Naive thymus-derived CD8-positive, alpha-beta T cell (primary cell): ENCODE measurements at regions of chr10 and their contacts with region 1.

Region 1: DNA sequence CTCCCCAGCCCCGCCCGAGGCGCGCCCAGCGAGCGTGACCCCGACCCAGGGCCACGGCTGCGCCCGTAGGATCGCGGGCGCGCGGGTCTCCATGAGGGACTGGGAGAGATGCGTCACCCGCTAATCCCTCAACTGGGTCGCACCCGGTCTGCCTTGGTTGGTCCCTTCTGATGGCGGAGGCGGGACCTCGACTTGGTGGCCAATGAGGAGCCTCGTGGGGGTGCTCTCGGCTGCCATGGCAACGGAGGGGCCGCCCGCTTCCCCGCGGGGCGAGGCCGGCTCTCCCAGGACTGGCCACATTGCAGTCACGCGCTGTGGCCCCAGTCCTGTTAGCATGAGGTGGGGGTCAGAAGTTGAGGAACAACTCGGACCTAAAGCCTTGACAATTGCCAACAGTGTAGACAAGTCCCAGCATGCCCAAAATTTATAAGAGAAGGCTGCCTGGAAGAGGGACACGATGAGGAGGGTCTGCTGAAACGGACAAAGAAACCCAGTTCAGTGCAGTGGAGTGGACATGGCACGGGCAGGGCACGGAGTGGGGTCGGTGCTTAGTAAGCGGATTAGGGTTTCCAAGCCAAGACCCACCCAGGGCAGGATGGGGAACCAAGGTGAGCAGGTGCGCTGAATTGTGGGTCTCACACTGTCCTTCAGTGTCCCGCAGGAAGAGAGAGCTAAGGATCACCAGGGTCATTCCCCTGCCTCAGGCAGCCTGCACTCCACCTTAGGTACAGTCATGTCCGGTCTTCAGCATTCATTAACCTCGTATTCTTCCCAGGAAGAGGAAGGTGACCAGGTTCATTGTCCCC is 24.4 kb downstream of the DDIT4 start:
- DNase-seq: peak; percentile 51 to 90 (median 78)
- ATAC-seq: peak; percentile 51
- H3K4me3 Mint-ChIP-seq: peak overlapping the region; percentile 39 to 89 (median 82)
- H3K27ac Mint-ChIP-seq: peak overlapping the region; percentile 43 to 100 (median 97)
- H3K4me1 Mint-ChIP-seq: peaks cover 25 to 63% (median 58%) of the 10 kb centered on the region in 4 donors
- H3K27me3 Mint-ChIP-seq: peaks cover 0 to 2% (median 0%) of the 10 kb centered on the region in 5 donors

Region 2: GRCh38 chr10:72260588-72261322 is 37.4 kb before region 1 on chr10:
- POLR2A ChIA-PET with region 1: interaction called, 12 read pairs
- DNase-seq: peak; percentile 62 to 86 (median 72)
- ATAC-seq: peak; percentile 72 to 75
- H3K4me3 Mint-ChIP-seq: peak overlapping the region; percentile 82 to 94 (median 89)
- H3K27ac Mint-ChIP-seq: peak overlapping the region; percentile 87 to 99 (median 94)
- H3K4me1 Mint-ChIP-seq: peaks cover 37 to 76% (median 75%) of the 10 kb centered on the region in 4 donors
- H3K27me3 Mint-ChIP-seq: no peaks in the 10 kb centered on the region

Region 3: DNA sequence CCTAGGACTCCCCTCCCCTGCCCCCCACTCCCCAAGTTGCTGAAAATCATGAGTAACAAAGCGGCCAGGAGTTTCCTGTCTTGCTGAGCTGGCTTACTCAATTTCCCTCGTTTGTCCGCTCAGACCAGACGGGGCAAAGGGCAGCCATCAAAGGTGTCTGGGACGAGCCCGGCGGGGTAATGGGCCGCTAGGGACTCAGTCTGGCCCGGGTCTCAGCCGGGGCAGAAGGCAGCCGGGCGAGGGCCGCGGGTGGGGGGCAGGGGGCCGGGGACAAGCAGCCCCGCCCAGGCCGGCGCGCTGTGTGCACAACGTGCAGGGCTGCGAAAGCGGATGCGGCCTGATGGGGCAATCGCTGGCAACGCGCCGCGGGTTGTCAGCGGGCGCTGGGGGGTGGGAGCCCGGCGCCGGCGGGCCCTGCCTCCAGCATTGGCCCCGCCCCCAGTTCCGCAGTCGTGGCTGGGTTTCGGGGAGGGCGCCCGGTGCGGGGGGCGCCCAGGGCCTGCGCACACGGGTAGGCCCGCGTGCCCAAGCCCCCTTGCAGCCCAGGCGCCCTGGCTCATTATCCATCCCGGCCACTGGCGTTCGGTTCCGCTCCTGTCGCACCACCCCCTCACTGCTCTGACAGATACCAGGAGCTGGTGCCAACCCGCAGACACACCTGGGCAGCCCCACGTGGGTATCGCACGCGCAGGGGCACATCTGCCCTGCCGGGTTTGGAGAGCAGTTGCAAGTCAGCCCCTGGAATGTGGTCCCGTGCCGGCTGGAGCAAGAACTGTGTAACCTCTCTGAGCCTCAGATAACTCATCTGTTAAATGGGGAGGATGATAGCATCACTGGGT is 21.5 kb after region 1 on chr10:
- POLR2A ChIA-PET with region 1: interaction called, 292 read pairs
- DNase-seq: peak; percentile 78 to 93 (median 88)
- ATAC-seq: peak; percentile 71 to 82
- H3K4me3 Mint-ChIP-seq: peak overlapping the region; percentile 67 to 85 (median 82)
- H3K27ac Mint-ChIP-seq: peak overlapping the region; percentile 90 to 99 (median 98)
- H3K4me1 Mint-ChIP-seq: peaks cover 46 to 90% (median 88%) of the 10 kb centered on the region in 4 donors
- H3K27me3 Mint-ChIP-seq: no peaks in the 10 kb centered on the region

Region 4: GRCh38 chr10:72525277-72525676 is 227.1 kb after region 1 on chr10:
- POLR2A ChIA-PET with region 1: no interaction called
- DNase-seq: no peak
- ATAC-seq: no peak
- H3K4me3 Mint-ChIP-seq: no peak overlapping the region
- H3K27ac Mint-ChIP-seq: no peak overlapping the region
- H3K4me1 Mint-ChIP-seq: no peaks in the 10 kb centered on the region
- H3K27me3 Mint-ChIP-seq: no peaks in the 10 kb centered on the region